Naive thymus-derived CD4-positive, alpha-beta T cell (primary cell): ENCODE measurements at regions of chr3 and their contacts with region 1.

Region 1: DNA sequence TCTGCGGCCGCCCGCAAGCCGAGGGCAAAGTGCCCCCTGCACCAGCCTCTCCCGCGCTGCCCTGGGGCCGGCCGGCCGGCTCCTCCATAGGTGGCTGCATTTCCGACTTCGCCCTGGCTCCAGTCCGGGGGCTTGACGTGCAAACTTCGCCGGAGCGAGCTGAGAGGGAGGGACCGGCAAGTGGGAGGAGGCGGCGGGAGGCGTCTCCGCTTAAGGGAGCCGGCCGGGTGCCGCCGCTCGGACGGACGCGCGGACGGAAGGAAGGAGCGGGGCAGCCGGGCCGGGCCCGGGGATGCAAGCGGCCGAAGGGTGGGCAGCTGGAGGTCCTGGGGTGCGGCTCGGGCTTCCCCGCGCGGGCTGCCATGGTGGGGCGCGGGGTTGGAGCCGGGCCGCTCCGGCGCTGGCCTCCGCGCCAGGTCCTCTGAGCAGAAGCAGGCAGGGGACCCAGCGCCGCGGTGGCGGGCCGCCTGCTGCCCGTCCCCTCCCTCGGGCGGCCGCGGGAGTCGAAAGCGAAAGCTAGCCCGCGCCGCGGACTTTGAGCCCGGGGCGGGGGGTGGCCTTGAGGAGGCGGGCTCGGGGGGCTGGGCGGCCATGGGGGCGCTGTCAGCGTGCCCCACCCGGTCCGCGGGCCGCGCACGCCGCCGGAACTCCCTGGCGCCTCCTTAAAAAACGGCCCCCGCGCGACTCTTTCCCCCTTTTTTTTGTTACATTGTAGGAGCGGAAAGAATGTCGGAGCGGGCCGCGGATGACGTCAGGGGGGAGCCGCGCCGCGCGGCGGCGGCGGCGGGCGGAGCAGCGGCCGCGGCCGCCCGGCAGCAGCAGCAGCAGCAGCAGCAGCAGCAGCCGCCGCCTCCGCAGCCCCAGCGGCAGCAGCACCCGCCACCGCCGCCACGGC is at the start of gene SCAANT1:
- DNase-seq: peak; percentile 69 to 85 (median 83)
- ATAC-seq: peak; percentile 76
- H3K4me3 ChIP-seq: peak within 1 kb of the TSS; percentile 61
- H3K4me3 Mint-ChIP-seq: peak within 1 kb of the TSS; percentile 87 to 98 (median 90)
- H3K27ac ChIP-seq: peak within 1 kb of the TSS; percentile 96
- H3K27ac Mint-ChIP-seq: peak within 1 kb of the TSS; percentile 88 to 99 (median 96)
- H3K4me1 ChIP-seq: peaks cover 15 to 21% of the 10 kb centered on the region in 2 donors
- H3K4me1 Mint-ChIP-seq: peaks cover 4 to 56% (median 45%) of the 10 kb centered on the region in 7 donors
- H3K27me3 ChIP-seq: no peaks in the 10 kb centered on the region
- H3K27me3 Mint-ChIP-seq: no peaks in the 10 kb centered on the region
- total RNA-seq, gene SCAANT1: not detected

Region 2: GRCh38 chr3:63863148-63864007 is 48.7 kb before region 1 on chr3 and contains the starts of genes ATXN7 and THOC7:
- CTCF ChIA-PET with region 1: no interaction called
- POLR2A ChIA-PET with region 1: interaction called, 13 read pairs
- intact Hi-C with region 1: loop called (anchors 1 kb)
- DNase-seq: peak; percentile 51 to 78 (median 74)
- ATAC-seq: peak; percentile 91
- H3K4me3 ChIP-seq: peak within 1 kb of the TSS; percentile 71
- H3K4me3 Mint-ChIP-seq: peak within 1 kb of the TSS; percentile 81 to 95 (median 93)
- H3K27ac ChIP-seq: peak within 1 kb of the TSS; percentile 84
- H3K27ac Mint-ChIP-seq: peak within 1 kb of the TSS; percentile 81 to 96 (median 93)
- H3K4me1 ChIP-seq: peaks cover 8 to 17% of the 10 kb centered on the region in 2 donors
- H3K4me1 Mint-ChIP-seq: peaks cover 39 to 74% (median 69%) of the 10 kb centered on the region in 7 donors
- H3K27me3 ChIP-seq: no peaks in the 10 kb centered on the region
- H3K27me3 Mint-ChIP-seq: no peaks in the 10 kb centered on the region
- total RNA-seq, gene ATXN7: 72.2 to 204 (median 160) TPM
- total RNA-seq, gene THOC7: 24.6 to 86.2 (median 38.7) TPM

Region 3: DNA sequence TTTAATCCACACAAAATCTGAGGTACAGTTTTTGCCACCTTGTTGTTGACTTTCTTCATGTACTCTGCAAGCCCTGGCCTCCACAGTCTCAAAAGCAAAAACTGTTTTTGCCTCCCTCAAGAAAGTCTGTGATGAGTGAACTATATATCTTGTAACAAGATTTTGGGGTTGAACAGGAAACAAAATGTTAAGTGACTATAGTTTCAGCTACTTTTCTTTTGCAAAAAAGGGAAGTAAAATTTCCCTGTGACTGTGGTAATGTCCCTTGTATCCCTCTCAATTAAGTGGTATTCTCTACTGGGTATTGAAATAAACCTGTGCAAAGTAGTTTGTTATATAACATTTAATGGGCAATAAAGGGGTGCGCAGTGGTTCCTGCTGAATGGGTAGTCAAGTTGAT is 21.3 kb after region 1 on chr3:
- CTCF ChIA-PET with region 1: no interaction called
- POLR2A ChIA-PET with region 1: no interaction called
- intact Hi-C with region 1: loop called in 1 of 2 experiments (anchors 2 kb)
- DNase-seq: no peak
- ATAC-seq: peak; percentile 14
- H3K4me3 ChIP-seq: no peak overlapping the region
- H3K4me3 Mint-ChIP-seq: peak overlapping the region in 3 of 10 donors; percentile 7 to 59 (median 15)
- H3K27ac ChIP-seq: no peak overlapping the region
- H3K27ac Mint-ChIP-seq: peak overlapping the region in 5 of 9 donors; percentile 4 to 79 (median 34)
- H3K4me1 ChIP-seq: peaks cover 9 to 30% of the 10 kb centered on the region in 2 donors
- H3K4me1 Mint-ChIP-seq: peaks cover 56 to 78% (median 68%) of the 10 kb centered on the region in 7 donors
- H3K27me3 ChIP-seq: no peaks in the 10 kb centered on the region
- H3K27me3 Mint-ChIP-seq: no peaks in the 10 kb centered on the region

Region 4: DNA sequence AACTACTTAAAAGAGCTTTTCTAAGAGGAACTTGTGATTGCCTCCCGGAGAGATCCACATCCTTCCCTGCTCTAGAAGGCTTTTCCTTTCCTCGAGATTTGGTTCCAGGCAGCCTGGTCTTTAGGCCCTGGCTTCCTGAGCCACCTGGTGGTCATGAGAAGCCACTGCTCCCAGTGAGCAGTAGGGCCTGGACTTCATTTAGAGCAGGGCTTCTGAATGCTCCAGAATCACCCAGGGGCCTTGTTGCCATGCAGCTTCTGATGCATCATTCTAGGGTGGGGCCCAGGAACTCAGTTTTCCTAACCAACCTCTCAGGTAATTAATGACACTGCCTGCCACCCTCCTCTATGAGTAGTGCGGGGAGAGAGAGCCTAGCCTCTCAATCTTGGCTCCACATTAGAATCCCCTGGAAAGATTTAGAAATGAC is 81.5 kb after region 1 on chr3:
- CTCF ChIA-PET with region 1: no interaction called
- POLR2A ChIA-PET with region 1: no interaction called
- intact Hi-C with region 1: loop called (anchors 1 to 2 kb)
- DNase-seq: peak; percentile 28 to 70 (median 58)
- ATAC-seq: peak; percentile 87
- H3K4me3 ChIP-seq: no peak overlapping the region
- H3K4me3 Mint-ChIP-seq: peak overlapping the region in 4 of 10 donors; percentile 5 to 23 (median 18)
- H3K27ac ChIP-seq: no peak overlapping the region
- H3K27ac Mint-ChIP-seq: peak overlapping the region; percentile 53 to 92 (median 84)
- H3K4me1 ChIP-seq: peaks cover 0 to 10% of the 10 kb centered on the region in 2 donors
- H3K4me1 Mint-ChIP-seq: peaks cover 34 to 79% (median 56%) of the 10 kb centered on the region in 7 donors
- H3K27me3 ChIP-seq: no peaks in the 10 kb centered on the region
- H3K27me3 Mint-ChIP-seq: no peaks in the 10 kb centered on the region